Stomach (tissue), 19 donors: ENCODE measurements at regions of chr7 and their contacts with region 1.

Region 1: GRCh38 chr7:98106647-98107445 is at the start of gene LMTK2:
- DNase-seq: peak; percentile 96 to 98
- H3K4me3 ChIP-seq: peak within 1 kb of the TSS; percentile 87 to 100 (median 94)
- H3K27ac ChIP-seq: peak within 1 kb of the TSS; percentile 89 to 92 (median 91)
- H3K4me1 ChIP-seq: peaks cover 33 to 45% (median 41%) of the 10 kb centered on the region in 4 donors
- H3K27me3 ChIP-seq: no peaks in the 10 kb centered on the region
- CTCF ChIP-seq: peak in 5 of 7 experiments; percentile 93 to 98 (median 94)
- EP300 ChIP-seq: no peak
- POLR2A ChIP-seq: peak in 2 of 4 donors; percentile 41 to 90
- total RNA-seq, gene LMTK2: 18.2 to 42.6 (median 20.6) TPM

Region 2: DNA sequence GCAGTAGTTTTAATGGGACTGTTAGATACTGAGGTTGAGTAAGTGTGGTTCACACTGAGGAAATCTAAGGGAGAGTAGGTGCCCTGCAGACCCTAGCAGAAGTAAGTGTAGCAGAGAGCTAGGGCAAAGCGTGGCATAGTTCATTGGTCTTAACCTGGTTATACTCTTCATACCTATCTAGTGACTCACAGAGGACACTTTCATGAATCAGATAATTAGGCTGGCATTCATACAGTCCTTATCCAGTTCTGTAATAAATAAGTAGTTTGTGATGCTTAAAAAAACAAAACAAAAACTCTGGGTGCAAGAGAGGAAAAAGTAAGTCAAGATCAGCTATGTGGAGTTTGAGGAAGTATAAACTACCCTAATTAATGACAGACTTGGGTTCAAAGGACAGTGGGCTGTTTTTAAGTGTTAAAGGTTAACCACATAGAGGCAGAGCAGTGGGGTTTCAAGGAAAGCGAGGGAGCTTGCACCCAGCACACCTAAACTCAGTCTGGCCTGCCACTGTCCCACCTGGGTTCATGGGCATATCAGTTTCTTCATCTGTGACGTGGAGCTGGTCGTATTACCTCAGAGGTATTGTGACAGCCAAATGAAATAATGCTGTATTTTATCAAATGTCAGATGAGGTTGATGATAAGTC is 26.9 kb after region 1 on chr7:
- intact Hi-C with region 1: loop called (anchors 2 kb)
- DNase-seq: peak in 1 of 2 donors; percentile 25
- H3K4me3 ChIP-seq: no peak overlapping the region
- H3K27ac ChIP-seq: peak overlapping the region in 3 of 5 donors; percentile 12 to 78 (median 74)
- H3K4me1 ChIP-seq: peaks cover 41 to 76% (median 55%) of the 10 kb centered on the region in 4 donors
- H3K27me3 ChIP-seq: no peaks in the 10 kb centered on the region
- CTCF ChIP-seq: no peak
- EP300 ChIP-seq: no peak
- POLR2A ChIP-seq: no peak

Region 3: GRCh38 chr7:98168181-98168905 is 61.5 kb after region 1 on chr7:
- intact Hi-C with region 1: loop called (anchors 5 kb)
- DNase-seq: peak; percentile 73 to 89
- H3K4me3 ChIP-seq: no peak overlapping the region
- H3K27ac ChIP-seq: no peak overlapping the region
- H3K4me1 ChIP-seq: peaks cover 7 to 55% (median 42%) of the 10 kb centered on the region in 4 donors
- H3K27me3 ChIP-seq: no peaks in the 10 kb centered on the region
- CTCF ChIP-seq: peak in 5 of 7 experiments; percentile 55 to 82 (median 81)
- EP300 ChIP-seq: no peak
- POLR2A ChIP-seq: no peak